ACHN (cell line): ENCODE measurements at regions of chr10 and their contacts with region 1.

Region 1: DNA sequence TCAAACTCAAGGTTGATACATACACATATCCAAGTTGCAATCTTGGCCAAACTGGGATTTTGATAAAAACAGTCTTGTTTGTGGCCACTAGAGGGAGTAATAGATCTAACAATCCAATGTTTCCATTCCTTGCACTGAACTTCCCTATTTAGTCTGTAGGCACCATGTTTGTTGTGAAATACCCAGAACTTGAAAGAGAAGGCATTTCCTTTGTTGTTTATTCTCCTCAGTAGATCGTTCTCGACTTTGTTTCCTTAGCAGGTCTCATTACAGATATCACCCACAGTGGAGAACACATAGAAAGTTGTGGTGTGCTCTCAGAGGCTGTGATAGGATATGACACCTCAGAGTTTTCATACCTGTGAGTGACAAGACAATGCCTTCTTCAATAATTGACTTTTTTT is 70.3 kb upstream of the MXI1 start:
- DNase-seq: peak; percentile 77

Region 2: DNA sequence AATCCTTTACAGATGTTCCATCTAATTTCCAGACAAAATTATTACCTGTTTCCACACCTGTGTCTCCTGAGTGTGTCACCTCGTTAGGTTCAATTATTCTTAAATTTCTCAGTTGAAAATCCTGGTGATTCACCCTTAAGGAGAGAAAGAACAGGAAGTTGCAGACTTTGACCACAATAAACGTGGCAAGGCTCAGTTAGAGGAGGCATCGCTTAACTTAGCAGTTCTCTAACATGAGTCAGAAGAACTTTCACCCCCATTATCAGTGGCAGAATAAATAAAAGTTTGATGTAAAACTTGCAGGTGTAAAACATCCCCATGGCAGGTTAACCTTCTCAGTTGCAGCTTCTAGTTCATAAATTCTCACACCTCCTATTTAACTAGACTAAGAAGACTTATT is 222.2 kb before region 1 on chr10:
- in situ Hi-C with region 1: no loop called
- DNase-seq: peak; percentile 95

Region 3: DNA sequence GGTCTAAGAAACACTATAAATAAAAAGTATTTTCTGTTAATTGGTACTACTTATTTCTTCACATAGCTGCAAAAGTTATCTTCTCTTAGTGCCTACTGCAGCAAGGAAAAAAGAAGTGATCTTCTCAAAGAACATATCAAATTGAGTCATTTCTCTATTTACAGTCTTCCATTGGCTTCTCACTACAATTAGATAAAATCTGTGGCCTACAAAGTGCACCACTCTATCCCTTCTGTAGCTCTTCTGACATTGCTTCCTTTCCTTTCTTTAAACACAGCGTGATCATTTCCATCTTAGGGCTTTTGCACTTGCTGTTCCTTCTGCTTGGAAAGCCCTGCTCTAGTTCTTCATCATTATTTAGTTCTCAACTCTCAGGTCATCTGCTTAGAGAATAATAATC is 115.0 kb after region 1 on chr10:
- in situ Hi-C with region 1: no loop called
- DNase-seq: no peak

Region 4: GRCh38 chr10:110279407-110279986 is 142.4 kb after region 1 on chr10:
- in situ Hi-C with region 1: loop called (anchors 25 kb)
- DNase-seq: peak; percentile 69

Region 5: DNA sequence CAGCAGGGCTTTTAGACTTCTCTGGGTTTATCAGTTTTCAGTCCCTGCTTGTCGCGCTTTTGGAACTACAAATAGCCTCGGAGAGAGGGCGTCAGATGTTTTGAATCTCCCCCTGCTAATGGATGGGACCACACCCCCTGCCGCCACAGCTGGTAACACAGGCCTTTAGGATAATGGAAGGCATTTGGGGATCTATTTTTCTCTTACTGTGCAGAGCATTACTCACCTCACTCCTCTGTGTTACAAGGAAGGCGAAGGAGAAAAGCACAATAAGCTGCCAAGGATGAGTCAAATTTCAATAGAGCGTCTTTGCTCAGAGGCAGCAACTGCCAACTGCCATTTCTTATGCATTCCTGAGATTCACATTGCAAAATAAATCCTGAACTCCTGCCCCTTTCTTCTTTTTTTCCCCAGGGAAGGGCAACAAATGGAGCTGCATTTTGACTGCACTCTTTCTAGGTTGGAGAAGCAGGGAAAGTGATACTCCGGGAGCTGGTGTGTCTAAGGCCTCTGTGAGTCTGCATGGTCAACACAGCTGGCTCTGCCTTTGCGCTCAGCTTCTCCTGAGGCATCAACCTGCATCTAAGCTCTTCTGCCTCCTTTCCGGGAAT is 199.1 kb after region 1 on chr10:
- in situ Hi-C with region 1: no loop called
- DNase-seq: peak; percentile 90

Region 6: GRCh38 chr10:110576220-110576619 is 439.1 kb after region 1 on chr10:
- in situ Hi-C with region 1: no loop called
- DNase-seq: no peak